IMR-90 (cell line): ENCODE measurements at regions of chr9 and their contacts with region 1.

Region 1: GRCh38 chr9:82606492-82607382 is 456.2 kb downstream of the RASEF start:
- DNase-seq: peak; percentile 81
- ATAC-seq: peak; percentile 74
- H3K4me3 ChIP-seq: no peak overlapping the region
- H3K27ac ChIP-seq: no peak overlapping the region
- H3K4me1 ChIP-seq: peaks cover 5% of the 10 kb centered on the region; the same call in 1 of the 2 replicates
- H3K27me3 ChIP-seq: peaks cover 7% of the 10 kb centered on the region
- CTCF ChIP-seq: peak; percentile 80
- POLR2A ChIP-seq: peak; percentile 38; the same call in 1 of the 2 replicates
- RAD21 ChIP-seq: peak; percentile 89

Region 2: GRCh38 chr9:81529556-81530195 is 1077.1 kb before region 1 on chr9:
- CTCF ChIA-PET with region 1: no interaction called
- POLR2A ChIA-PET with region 1: no interaction called
- dilution Hi-C with region 1: no loop called
- in situ Hi-C with region 1: loop called (anchors 25 kb)
- intact Hi-C with region 1: loop called (anchors 10 kb)
- DNase-seq: peak; percentile 58
- ATAC-seq: no peak
- H3K4me3 ChIP-seq: no peak overlapping the region
- H3K27ac ChIP-seq: no peak overlapping the region
- H3K4me1 ChIP-seq: peaks cover 2% of the 10 kb centered on the region; the same call in 1 of the 2 replicates
- H3K27me3 ChIP-seq: no peaks in the 10 kb centered on the region
- CTCF ChIP-seq: no peak
- POLR2A ChIP-seq: no peak
- RAD21 ChIP-seq: no peak

Region 3: GRCh38 chr9:81874931-81875330 is 731.8 kb before region 1 on chr9:
- CTCF ChIA-PET with region 1: no interaction called
- POLR2A ChIA-PET with region 1: no interaction called
- dilution Hi-C with region 1: no loop called
- in situ Hi-C with region 1: no loop called
- intact Hi-C with region 1: loop called (anchors 10 kb)
- DNase-seq: peak; percentile 94
- ATAC-seq: peak; percentile 54
- H3K4me3 ChIP-seq: no peak overlapping the region
- H3K27ac ChIP-seq: no peak overlapping the region
- H3K4me1 ChIP-seq: peaks cover 4% of the 10 kb centered on the region
- H3K27me3 ChIP-seq: no peaks in the 10 kb centered on the region
- CTCF ChIP-seq: no peak
- POLR2A ChIP-seq: no peak
- RAD21 ChIP-seq: peak; percentile 5; the same call in 1 of the 2 replicates

Region 4: DNA sequence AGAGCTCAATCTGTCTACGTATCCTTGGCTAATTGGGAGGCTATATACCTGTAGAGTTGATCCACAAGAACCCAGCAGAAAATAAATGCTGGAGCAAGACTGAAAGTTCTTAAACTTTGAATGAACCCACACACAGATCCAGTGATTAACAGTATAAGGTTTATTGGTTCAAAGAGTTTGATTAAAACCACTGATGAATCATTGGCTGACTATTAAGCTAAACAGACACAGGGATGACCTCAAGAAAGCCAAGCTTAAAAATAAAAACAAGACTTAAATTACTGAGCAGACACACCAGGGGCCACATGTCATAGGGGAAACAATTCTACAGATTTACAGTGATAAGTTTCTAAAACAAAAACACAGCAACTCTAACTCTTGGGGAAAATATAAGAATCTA is 454.6 kb before region 1 on chr9:
- CTCF ChIA-PET with region 1: no interaction called
- POLR2A ChIA-PET with region 1: no interaction called
- dilution Hi-C with region 1: no loop called
- in situ Hi-C with region 1: no loop called
- intact Hi-C with region 1: loop called (anchors 10 kb)
- DNase-seq: peak; percentile 84
- ATAC-seq: peak; percentile 64
- H3K4me3 ChIP-seq: no peak overlapping the region
- H3K27ac ChIP-seq: no peak overlapping the region
- H3K4me1 ChIP-seq: peaks cover 6% of the 10 kb centered on the region
- H3K27me3 ChIP-seq: no peaks in the 10 kb centered on the region
- CTCF ChIP-seq: no peak
- POLR2A ChIP-seq: no peak
- RAD21 ChIP-seq: no peak

Region 5: DNA sequence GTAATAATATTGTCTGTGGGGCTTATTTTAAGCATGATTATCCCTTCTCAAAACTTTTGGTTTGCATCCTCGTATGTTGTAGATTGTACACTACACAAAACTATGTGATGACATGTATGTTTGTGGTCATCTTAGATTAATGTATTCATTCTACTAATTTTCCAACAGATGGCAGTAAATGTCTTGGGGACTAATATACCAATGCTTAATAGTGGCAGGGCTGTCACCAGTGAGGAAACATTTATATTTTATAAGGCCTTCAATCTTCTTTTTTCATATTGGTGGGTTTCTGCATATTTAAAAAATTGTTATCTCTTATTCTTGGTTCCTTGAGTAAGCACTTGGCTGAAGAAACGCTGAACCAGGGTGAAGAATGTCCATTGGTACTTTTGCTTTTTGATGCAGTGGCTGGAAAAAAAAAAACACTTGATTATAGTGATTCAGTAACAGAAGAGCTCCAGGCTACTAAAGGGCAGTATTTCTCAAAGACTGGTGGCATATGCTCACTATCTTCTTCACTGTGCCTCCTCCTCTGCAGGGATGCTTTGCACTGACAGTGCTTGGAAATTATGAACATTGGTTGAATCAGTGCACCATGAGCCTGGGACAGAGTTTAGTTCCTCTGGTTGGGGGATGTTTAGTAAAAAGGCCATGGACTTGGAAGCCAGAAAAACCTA is 74.1 kb before region 1 on chr9:
- CTCF ChIA-PET with region 1: interaction called, 13 read pairs
- POLR2A ChIA-PET with region 1: no interaction called
- dilution Hi-C with region 1: no loop called
- in situ Hi-C with region 1: no loop called
- intact Hi-C with region 1: loop called (anchors 1 kb)
- DNase-seq: peak; percentile 19
- ATAC-seq: peak; percentile 67
- H3K4me3 ChIP-seq: no peak overlapping the region
- H3K27ac ChIP-seq: no peak overlapping the region
- H3K4me1 ChIP-seq: no peaks in the 10 kb centered on the region
- H3K27me3 ChIP-seq: no peaks in the 10 kb centered on the region
- CTCF ChIP-seq: peak; percentile 35
- POLR2A ChIP-seq: no peak
- RAD21 ChIP-seq: peak; percentile 41; the same call in 1 of the 2 replicates

Region 6: GRCh38 chr9:82757673-82758350 is 151.1 kb after region 1 on chr9:
- CTCF ChIA-PET with region 1: no interaction called
- POLR2A ChIA-PET with region 1: no interaction called
- dilution Hi-C with region 1: no loop called
- in situ Hi-C with region 1: no loop called
- intact Hi-C with region 1: no loop called
- DNase-seq: no peak
- ATAC-seq: no peak
- H3K4me3 ChIP-seq: no peak overlapping the region
- H3K27ac ChIP-seq: no peak overlapping the region
- H3K4me1 ChIP-seq: no peaks in the 10 kb centered on the region
- H3K27me3 ChIP-seq: no peaks in the 10 kb centered on the region
- CTCF ChIP-seq: no peak
- POLR2A ChIP-seq: no peak
- RAD21 ChIP-seq: no peak

Region 7: GRCh38 chr9:83238871-83239640 is 632.3 kb after region 1 on chr9:
- CTCF ChIA-PET with region 1: no interaction called
- POLR2A ChIA-PET with region 1: no interaction called
- dilution Hi-C with region 1: no loop called
- in situ Hi-C with region 1: no loop called
- intact Hi-C with region 1: no loop called
- DNase-seq: no peak
- ATAC-seq: no peak
- H3K4me3 ChIP-seq: no peak overlapping the region
- H3K27ac ChIP-seq: no peak overlapping the region
- H3K4me1 ChIP-seq: no peaks in the 10 kb centered on the region
- H3K27me3 ChIP-seq: no peaks in the 10 kb centered on the region
- CTCF ChIP-seq: no peak
- POLR2A ChIP-seq: no peak
- RAD21 ChIP-seq: no peak